ENCODE measurements at regions of chr2 and their contacts with region 1.

Region 1: DNA sequence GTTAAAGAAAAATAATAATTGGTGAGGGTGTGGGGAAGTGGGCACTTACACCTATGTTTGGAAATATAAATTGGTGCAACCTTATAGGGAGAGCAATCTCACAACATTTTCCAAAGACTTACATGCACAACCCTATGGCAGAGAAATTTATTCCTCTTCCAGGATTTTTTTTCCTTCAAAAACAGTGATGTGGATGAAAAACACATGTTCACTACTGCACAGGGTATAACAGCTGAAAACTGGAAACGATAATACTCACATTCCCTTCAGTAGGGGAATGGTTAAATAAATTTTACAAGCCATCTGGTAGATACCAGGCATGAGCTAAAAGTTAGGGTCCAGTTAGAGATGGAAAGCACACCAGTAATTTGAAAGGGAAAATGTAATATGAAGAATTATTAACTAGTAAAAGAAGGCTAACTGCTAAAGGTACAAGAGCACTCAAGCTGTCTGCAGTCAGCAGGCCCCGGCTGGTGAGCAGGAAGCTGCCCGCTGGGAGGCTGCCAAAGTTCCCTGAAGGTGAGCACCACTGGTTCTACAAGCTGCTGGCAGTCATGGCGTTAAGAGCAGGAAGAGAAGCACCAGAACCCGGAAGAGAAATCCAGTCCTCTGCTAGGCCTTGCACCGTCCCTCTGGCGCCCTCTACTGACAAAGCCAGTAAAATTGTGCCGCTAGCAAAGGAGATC is 28.4 kb upstream of the CASP8 start:
- DNase-seq: peak; percentile 90 to 94 (median 91)
- H3K4me3 ChIP-seq: peak overlapping the region in 1 of 2 donors; percentile 36
- H3K4me3 Mint-ChIP-seq: peak overlapping the region; percentile 62 to 98 (median 96)
- H3K27ac ChIP-seq: peak overlapping the region; percentile 84
- H3K27ac Mint-ChIP-seq: peak overlapping the region; percentile 79 to 96 (median 90)
- H3K4me1 ChIP-seq: peaks cover 47% of the 10 kb centered on the region
- H3K4me1 Mint-ChIP-seq: peaks cover 32 to 63% (median 42%) of the 10 kb centered on the region in 4 donors
- H3K27me3 ChIP-seq: no peaks in the 10 kb centered on the region
- H3K27me3 Mint-ChIP-seq: no peaks in the 10 kb centered on the region

Region 2: GRCh38 chr2:200888704-200889625 is 343.0 kb before region 1 on chr2 and contains the starts of genes NIF3L1 and PPIL3:
- CTCF ChIA-PET with region 1: interaction called, 8 read pairs
- POLR2A ChIA-PET with region 1: interaction called, 12 read pairs
- intact Hi-C with region 1: no loop called
- DNase-seq: peak; percentile 96 to 98 (median 96)
- H3K4me3 ChIP-seq: peak within 1 kb of the TSS; percentile 91 to 92
- H3K4me3 Mint-ChIP-seq: peak within 1 kb of the TSS; percentile 90 to 98 (median 96)
- H3K27ac ChIP-seq: peak within 1 kb of the TSS; percentile 85
- H3K27ac Mint-ChIP-seq: peak within 1 kb of the TSS; percentile 98 to 100 (median 99)
- H3K4me1 ChIP-seq: peaks cover 31% of the 10 kb centered on the region
- H3K4me1 Mint-ChIP-seq: peaks cover 30 to 57% (median 45%) of the 10 kb centered on the region in 4 donors
- H3K27me3 ChIP-seq: no peaks in the 10 kb centered on the region
- H3K27me3 Mint-ChIP-seq: no peaks in the 10 kb centered on the region
- total RNA-seq, gene NIF3L1: 30.0 to 30.3 TPM
- total RNA-seq, gene PPIL3: 48.0 to 57.7 TPM

Region 3: DNA sequence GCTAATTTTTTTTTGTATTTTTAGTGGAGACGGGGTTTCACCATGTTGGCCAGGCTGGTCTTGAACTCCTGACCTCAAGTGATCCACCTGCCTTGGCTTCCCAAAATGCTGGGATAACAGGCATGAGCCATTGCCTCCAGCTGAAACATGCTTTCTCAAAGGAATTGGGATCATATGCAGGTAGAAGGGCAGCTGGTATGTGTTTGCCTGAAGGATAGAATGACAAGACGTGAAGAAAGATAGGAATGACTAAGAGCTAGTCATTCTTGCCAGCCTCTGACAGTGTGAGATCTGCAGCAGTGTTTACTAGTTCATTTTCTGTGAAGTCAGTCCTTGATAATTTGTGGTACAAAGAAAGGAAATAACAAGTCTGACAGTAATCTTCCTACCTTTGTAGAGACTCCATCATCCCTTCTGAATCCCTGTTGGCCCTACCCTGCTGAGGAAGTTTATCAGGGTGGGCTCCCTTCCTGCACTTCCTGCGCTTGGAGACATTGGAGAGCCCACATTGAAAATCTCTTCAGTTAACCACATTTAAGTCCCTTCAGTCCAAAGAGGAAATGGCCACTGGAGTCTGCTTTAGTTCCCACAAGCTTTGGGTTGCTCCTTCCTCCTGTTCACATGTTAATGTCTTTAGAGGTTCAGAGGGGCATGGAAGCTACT is 101.3 kb before region 1 on chr2:
- CTCF ChIA-PET with region 1: interaction called, 22 read pairs
- POLR2A ChIA-PET with region 1: interaction called, 5 read pairs
- intact Hi-C with region 1: no loop called
- DNase-seq: peak; percentile 42 to 85 (median 55)
- H3K4me3 ChIP-seq: peak overlapping the region in 1 of 2 donors; percentile 34
- H3K4me3 Mint-ChIP-seq: peak overlapping the region; percentile 72 to 86 (median 80)
- H3K27ac ChIP-seq: peak overlapping the region; percentile 64
- H3K27ac Mint-ChIP-seq: peak overlapping the region; percentile 87 to 98 (median 97)
- H3K4me1 ChIP-seq: peaks cover 89% of the 10 kb centered on the region
- H3K4me1 Mint-ChIP-seq: peaks cover 64 to 81% (median 72%) of the 10 kb centered on the region in 4 donors
- H3K27me3 ChIP-seq: no peaks in the 10 kb centered on the region
- H3K27me3 Mint-ChIP-seq: no peaks in the 10 kb centered on the region

Region 4: GRCh38 chr2:201208563-201209252 is 23.2 kb before region 1 on chr2:
- CTCF ChIA-PET with region 1: interaction called, 45 read pairs
- POLR2A ChIA-PET with region 1: interaction called, 17 read pairs
- intact Hi-C with region 1: loop called (anchors 1 kb)
- DNase-seq: no peak
- H3K4me3 ChIP-seq: no peak overlapping the region
- H3K4me3 Mint-ChIP-seq: no peak overlapping the region
- H3K27ac ChIP-seq: no peak overlapping the region
- H3K27ac Mint-ChIP-seq: peak overlapping the region in 2 of 7 donors; percentile 1 to 68
- H3K4me1 ChIP-seq: peaks cover 24% of the 10 kb centered on the region
- H3K4me1 Mint-ChIP-seq: peaks cover 22 to 31% (median 27%) of the 10 kb centered on the region in 4 donors
- H3K27me3 ChIP-seq: no peaks in the 10 kb centered on the region
- H3K27me3 Mint-ChIP-seq: no peaks in the 10 kb centered on the region

Region 5: GRCh38 chr2:201270293-201271001 is 38.5 kb after region 1 on chr2:
- CTCF ChIA-PET with region 1: interaction called, 108 read pairs
- POLR2A ChIA-PET with region 1: interaction called, 249 read pairs
- intact Hi-C with region 1: loop called (anchors 2 kb)
- DNase-seq: no peak
- H3K4me3 ChIP-seq: no peak overlapping the region
- H3K4me3 Mint-ChIP-seq: peak overlapping the region in 6 of 8 donors; percentile 26 to 70 (median 44)
- H3K27ac ChIP-seq: no peak overlapping the region
- H3K27ac Mint-ChIP-seq: peak overlapping the region; percentile 58 to 88 (median 80)
- H3K4me1 ChIP-seq: peaks cover 83% of the 10 kb centered on the region
- H3K4me1 Mint-ChIP-seq: peaks cover 63 to 88% (median 75%) of the 10 kb centered on the region in 4 donors
- H3K27me3 ChIP-seq: no peaks in the 10 kb centered on the region
- H3K27me3 Mint-ChIP-seq: no peaks in the 10 kb centered on the region

Region 6: DNA sequence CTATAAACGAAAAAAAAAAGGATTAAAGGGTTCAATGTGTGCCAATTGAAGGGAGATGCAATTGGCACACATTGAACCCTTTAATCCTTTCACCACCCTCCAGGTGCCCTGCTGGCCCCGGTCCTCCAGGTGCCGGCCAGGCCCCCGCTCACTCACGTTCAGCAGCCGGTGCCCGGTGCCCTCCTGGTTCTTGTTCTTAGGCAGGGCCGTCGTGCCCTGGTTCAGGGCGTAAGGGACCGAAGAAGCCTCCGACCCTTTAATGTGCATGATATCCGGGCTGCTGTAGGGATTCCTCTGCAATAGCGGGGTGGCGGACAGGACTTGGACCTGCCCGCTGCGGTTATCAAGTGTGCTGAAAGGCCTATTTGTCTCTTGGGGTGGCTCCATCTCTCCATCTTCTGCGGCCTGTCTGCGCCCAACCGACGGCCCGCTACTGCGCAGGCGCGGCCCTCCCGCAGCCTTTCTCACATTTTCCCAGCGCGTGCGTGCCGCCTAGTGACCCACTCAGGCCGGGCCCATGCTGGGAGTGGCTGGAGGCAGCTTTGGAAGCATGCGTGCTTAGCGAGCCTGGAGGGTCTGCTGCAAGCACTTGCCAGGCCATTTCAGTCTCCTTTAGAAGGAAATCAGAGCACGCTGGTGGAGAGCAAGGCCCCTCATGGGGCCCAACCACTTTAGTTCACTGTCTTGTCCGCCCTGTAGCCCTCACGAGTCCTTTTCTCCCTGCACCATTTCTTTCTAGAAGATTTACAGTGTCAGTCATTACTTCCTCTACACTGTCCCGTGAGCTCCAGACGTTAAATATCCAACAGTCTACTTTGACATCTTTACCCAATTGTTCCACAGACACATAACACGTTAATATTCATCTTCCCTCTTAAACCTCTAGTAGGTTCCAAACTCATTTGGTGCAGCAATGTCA is 387.1 kb after region 1 on chr2:
- CTCF ChIA-PET with region 1: no interaction called
- POLR2A ChIA-PET with region 1: no interaction called
- intact Hi-C with region 1: no loop called
- DNase-seq: no peak
- H3K4me3 ChIP-seq: no peak overlapping the region
- H3K4me3 Mint-ChIP-seq: no peak overlapping the region
- H3K27ac ChIP-seq: no peak overlapping the region
- H3K27ac Mint-ChIP-seq: no peak overlapping the region
- H3K4me1 ChIP-seq: no peaks in the 10 kb centered on the region
- H3K4me1 Mint-ChIP-seq: no peaks in the 10 kb centered on the region
- H3K27me3 ChIP-seq: no peaks in the 10 kb centered on the region
- H3K27me3 Mint-ChIP-seq: no peaks in the 10 kb centered on the region

Region 7: DNA sequence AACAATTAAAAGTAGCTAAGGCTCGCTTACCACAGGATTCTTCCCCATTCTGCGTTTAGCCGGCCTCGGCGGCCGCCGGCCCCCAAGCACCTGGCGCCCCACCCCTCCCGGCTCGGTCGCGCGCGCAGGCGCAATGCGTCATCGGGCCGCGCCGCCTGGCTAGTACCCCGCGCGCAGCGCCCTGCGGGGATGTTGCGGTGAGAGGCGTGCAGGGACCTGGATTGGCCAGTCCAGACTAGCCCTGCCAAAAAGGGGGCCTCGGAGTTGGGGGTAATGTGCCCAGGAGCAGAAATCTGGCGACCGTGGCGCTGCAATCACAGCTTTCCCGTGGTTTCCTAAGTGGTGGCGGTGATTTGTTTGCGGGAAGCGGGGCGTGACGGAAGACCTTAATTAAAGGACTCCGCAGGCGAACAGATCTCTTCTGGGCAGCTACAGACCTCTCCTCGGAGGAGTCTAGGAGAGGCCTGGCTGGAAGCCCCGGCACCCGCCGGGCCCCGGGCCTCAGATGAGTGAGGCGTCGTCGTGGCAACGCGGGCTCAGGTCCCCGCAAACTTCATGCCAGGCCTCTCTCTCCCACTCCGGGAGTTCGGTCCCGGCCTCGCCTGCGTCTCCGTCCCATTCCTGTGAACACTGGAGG is 410.8 kb after region 1 on chr2:
- CTCF ChIA-PET with region 1: interaction called, 3 read pairs
- POLR2A ChIA-PET with region 1: no interaction called
- intact Hi-C with region 1: loop called (anchors 1 kb)
- DNase-seq: peak; percentile 83 to 91 (median 89)
- H3K4me3 ChIP-seq: peak overlapping the region; percentile 92 to 97
- H3K4me3 Mint-ChIP-seq: peak overlapping the region; percentile 89 to 99 (median 96)
- H3K27ac ChIP-seq: peak overlapping the region; percentile 83
- H3K27ac Mint-ChIP-seq: peak overlapping the region; percentile 95 to 100 (median 96)
- H3K4me1 ChIP-seq: no peaks in the 10 kb centered on the region
- H3K4me1 Mint-ChIP-seq: peaks cover 7 to 23% (median 7%) of the 10 kb centered on the region in 4 donors
- H3K27me3 ChIP-seq: no peaks in the 10 kb centered on the region
- H3K27me3 Mint-ChIP-seq: no peaks in the 10 kb centered on the region

Measured in CD4-positive, alpha-beta memory T cell (primary cell).